ENCODE measurements at regions of chr12 and their contacts with region 1.

Region 1: GRCh38 chr12:4857472-4858291 is 52.0 kb upstream of the KCNA1 start:
- DNase-seq: peak; percentile 58 to 79
- ATAC-seq: peak; percentile 70 to 88 (median 82)
- H3K4me3 ChIP-seq: peak overlapping the region; percentile 16
- H3K4me3 Mint-ChIP-seq: peak overlapping the region; percentile 81
- H3K27ac ChIP-seq: no peak overlapping the region
- H3K27ac Mint-ChIP-seq: peak overlapping the region in 1 of 2 donors; percentile 8
- H3K4me1 ChIP-seq: peaks cover 10% of the 10 kb centered on the region
- H3K4me1 Mint-ChIP-seq: peaks cover 16 to 25% of the 10 kb centered on the region in 2 donors
- H3K27me3 ChIP-seq: peaks cover 6% of the 10 kb centered on the region
- H3K27me3 Mint-ChIP-seq: peaks cover 12 to 14% of the 10 kb centered on the region in 2 donors
- CTCF ChIP-seq: peak; percentile 87

Region 2: DNA sequence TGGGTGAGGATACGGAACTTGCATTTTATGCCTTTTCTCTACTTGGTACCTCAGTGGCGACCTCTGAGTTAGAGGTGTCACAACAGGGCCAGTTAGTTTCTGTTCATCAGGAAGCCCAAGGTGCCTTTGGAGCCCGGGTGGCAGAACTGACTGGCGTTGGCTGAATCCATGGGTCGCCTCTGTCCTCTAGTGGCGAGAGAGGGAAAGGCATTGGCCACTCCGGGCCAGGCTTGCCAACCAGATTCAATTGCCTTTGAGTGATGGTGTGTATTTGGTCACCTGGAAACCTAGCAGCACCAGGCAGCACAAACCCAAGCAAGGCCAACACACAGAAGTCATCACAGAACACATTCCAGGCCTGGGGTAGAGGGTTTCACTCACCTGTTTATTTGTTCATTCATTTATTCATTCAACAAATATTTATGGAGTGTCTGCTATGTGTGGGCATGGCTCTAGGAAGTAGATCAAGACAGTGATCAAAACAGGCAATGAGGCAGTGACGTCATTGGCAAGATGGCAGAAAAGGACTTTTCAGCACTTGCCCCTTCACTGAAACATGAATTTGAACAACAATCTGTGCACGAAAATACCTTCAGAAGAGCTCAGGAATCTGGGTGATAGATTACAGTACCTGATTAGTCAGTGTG is 145.5 kb after region 1 on chr12:
- intact Hi-C with region 1: loop called (anchors 5 kb)
- DNase-seq: peak in 1 of 2 donors; percentile 42
- ATAC-seq: peak in 1 of 3 donors; percentile 68
- H3K4me3 ChIP-seq: no peak overlapping the region
- H3K4me3 Mint-ChIP-seq: no peak overlapping the region
- H3K27ac ChIP-seq: no peak overlapping the region
- H3K27ac Mint-ChIP-seq: no peak overlapping the region
- H3K4me1 ChIP-seq: no peaks in the 10 kb centered on the region
- H3K4me1 Mint-ChIP-seq: no peaks in the 10 kb centered on the region
- H3K27me3 ChIP-seq: no peaks in the 10 kb centered on the region
- H3K27me3 Mint-ChIP-seq: peaks cover 9 to 11% of the 10 kb centered on the region in 2 donors
- CTCF ChIP-seq: peak; percentile 42

Region 3: GRCh38 chr12:5083955-5084849 is 226.5 kb after region 1 on chr12:
- intact Hi-C with region 1: loop called (anchors 5 kb)
- DNase-seq: peak in 1 of 2 donors; percentile 47
- ATAC-seq: peak in 1 of 3 donors; percentile 50
- H3K4me3 ChIP-seq: no peak overlapping the region
- H3K4me3 Mint-ChIP-seq: no peak overlapping the region
- H3K27ac ChIP-seq: no peak overlapping the region
- H3K27ac Mint-ChIP-seq: no peak overlapping the region
- H3K4me1 ChIP-seq: no peaks in the 10 kb centered on the region
- H3K4me1 Mint-ChIP-seq: no peaks in the 10 kb centered on the region
- H3K27me3 ChIP-seq: no peaks in the 10 kb centered on the region
- H3K27me3 Mint-ChIP-seq: peaks cover 0 to 6% of the 10 kb centered on the region in 2 donors
- CTCF ChIP-seq: peak; percentile 22

Region 4: GRCh38 chr12:5096241-5096935 is 238.7 kb after region 1 on chr12:
- intact Hi-C with region 1: no loop called
- DNase-seq: no peak
- ATAC-seq: no peak
- H3K4me3 ChIP-seq: no peak overlapping the region
- H3K4me3 Mint-ChIP-seq: no peak overlapping the region
- H3K27ac ChIP-seq: no peak overlapping the region
- H3K27ac Mint-ChIP-seq: no peak overlapping the region
- H3K4me1 ChIP-seq: no peaks in the 10 kb centered on the region
- H3K4me1 Mint-ChIP-seq: no peaks in the 10 kb centered on the region
- H3K27me3 ChIP-seq: no peaks in the 10 kb centered on the region
- H3K27me3 Mint-ChIP-seq: peaks cover 17 to 24% of the 10 kb centered on the region in 2 donors
- CTCF ChIP-seq: no peak